Esophagus muscularis mucosa (tissue), 4 donors: ENCODE measurements at regions of chr6 and their contacts with region 1.

Region 1: GRCh38 chr6:159042003-159042825 is 2.6 kb downstream of the TAGAP start:
- DNase-seq: peak; percentile 86
- H3K4me3 ChIP-seq: peak overlapping the region in 2 of 4 donors; percentile 17 to 53
- H3K27ac ChIP-seq: peak overlapping the region in 1 of 4 donors; percentile 50
- H3K4me1 ChIP-seq: peaks cover 0 to 14% (median 5%) of the 10 kb centered on the region in 4 donors
- H3K27me3 ChIP-seq: peaks cover 0 to 3% (median 0%) of the 10 kb centered on the region in 4 donors
- CTCF ChIP-seq: peak in 2 of 3 experiments; percentile 86 to 88
- EP300 ChIP-seq: no peak
- POLR2A ChIP-seq: no peak

Region 2: GRCh38 chr6:159104163-159104925 is 62.1 kb after region 1 on chr6:
- intact Hi-C with region 1: loop called (anchors 1 kb)
- DNase-seq: no peak
- H3K4me3 ChIP-seq: no peak overlapping the region
- H3K27ac ChIP-seq: no peak overlapping the region
- H3K4me1 ChIP-seq: peaks cover 7 to 13% (median 10%) of the 10 kb centered on the region in 4 donors
- H3K27me3 ChIP-seq: peaks cover 0 to 12% (median 0%) of the 10 kb centered on the region in 4 donors
- CTCF ChIP-seq: peak; percentile 78 to 94 (median 79)
- EP300 ChIP-seq: no peak
- POLR2A ChIP-seq: no peak

Region 3: DNA sequence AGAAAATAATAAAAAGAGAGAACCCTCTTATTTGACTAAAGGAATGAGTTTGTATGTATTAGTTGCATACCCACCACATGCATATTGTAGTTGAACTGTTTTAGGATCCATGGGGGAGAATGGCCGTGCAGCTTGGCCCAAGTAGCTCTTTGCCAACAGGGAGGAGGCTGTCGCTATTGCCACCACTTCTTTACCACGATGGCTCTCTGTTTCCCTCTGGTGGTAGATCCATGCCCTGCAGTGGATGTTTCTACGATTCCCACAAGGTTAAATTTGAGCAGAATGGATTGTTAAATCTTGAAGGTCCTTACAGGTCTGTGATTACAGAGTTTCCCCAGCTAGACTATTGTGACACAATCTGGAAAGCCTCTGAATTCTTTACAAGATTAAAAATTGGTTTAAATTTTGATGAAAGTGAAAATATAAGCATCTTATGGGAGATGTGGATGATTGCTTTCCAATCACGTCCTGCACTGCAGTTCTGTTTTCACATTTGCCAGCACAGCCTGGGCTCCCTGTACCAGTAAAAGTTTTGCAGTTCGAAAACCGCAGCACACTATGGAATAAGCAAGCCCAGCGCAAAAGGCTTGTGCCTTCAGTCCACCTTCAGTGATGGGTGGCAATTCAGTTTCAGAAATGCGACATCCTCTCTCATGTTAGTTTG is 92.6 kb after region 1 on chr6:
- intact Hi-C with region 1: loop called (anchors 1 kb)
- DNase-seq: peak; percentile 92
- H3K4me3 ChIP-seq: no peak overlapping the region
- H3K27ac ChIP-seq: no peak overlapping the region
- H3K4me1 ChIP-seq: peaks cover 0 to 13% (median 2%) of the 10 kb centered on the region in 4 donors
- H3K27me3 ChIP-seq: no peaks in the 10 kb centered on the region
- CTCF ChIP-seq: peak in 2 of 3 experiments; percentile 92 to 95
- EP300 ChIP-seq: no peak
- POLR2A ChIP-seq: no peak